ENCODE measurements at regions of chr12 and their contacts with region 1.

Region 1: GRCh38 chr12:45388545-45388944 is 172.7 kb downstream of the ANO6 start:
- DNase-seq: no peak
- H3K4me3 ChIP-seq: no peak overlapping the region
- H3K27ac ChIP-seq: no peak overlapping the region
- H3K4me1 ChIP-seq: no peaks in the 10 kb centered on the region
- H3K27me3 ChIP-seq: no peaks in the 10 kb centered on the region
- CTCF ChIP-seq: peak in 2 of 3 experiments; percentile 41 to 60
- POLR2A ChIP-seq: no peak

Region 2: GRCh38 chr12:45183246-45183645 is 205.3 kb before region 1 on chr12:
- intact Hi-C with region 1: loop called (anchors 10 kb)
- DNase-seq: no peak
- H3K4me3 ChIP-seq: no peak overlapping the region
- H3K27ac ChIP-seq: no peak overlapping the region
- H3K4me1 ChIP-seq: no peaks in the 10 kb centered on the region
- H3K27me3 ChIP-seq: no peaks in the 10 kb centered on the region
- CTCF ChIP-seq: peak in 2 of 3 experiments; percentile 17 to 25
- POLR2A ChIP-seq: no peak

Region 3: GRCh38 chr12:45893240-45893639 is 504.7 kb after region 1 on chr12:
- intact Hi-C with region 1: no loop called
- DNase-seq: no peak
- H3K4me3 ChIP-seq: no peak overlapping the region
- H3K27ac ChIP-seq: no peak overlapping the region
- H3K4me1 ChIP-seq: no peaks in the 10 kb centered on the region
- H3K27me3 ChIP-seq: no peaks in the 10 kb centered on the region
- CTCF ChIP-seq: no peak
- POLR2A ChIP-seq: no peak